ENCODE measurements at regions of chr19 and their contacts with region 1.

Region 1: GRCh38 chr19:58328999-58329398 is 2.2 kb downstream of the ZSCAN22 start:
- DNase-seq: no peak
- H3K4me3 ChIP-seq: no peak overlapping the region
- H3K27ac ChIP-seq: no peak overlapping the region
- H3K4me1 ChIP-seq: peaks cover 15% of the 10 kb centered on the region
- H3K27me3 ChIP-seq: no peaks in the 10 kb centered on the region
- CTCF ChIP-seq: no peak
- EP300 ChIP-seq: no peak
- POLR2A ChIP-seq: no peak

Region 2: DNA sequence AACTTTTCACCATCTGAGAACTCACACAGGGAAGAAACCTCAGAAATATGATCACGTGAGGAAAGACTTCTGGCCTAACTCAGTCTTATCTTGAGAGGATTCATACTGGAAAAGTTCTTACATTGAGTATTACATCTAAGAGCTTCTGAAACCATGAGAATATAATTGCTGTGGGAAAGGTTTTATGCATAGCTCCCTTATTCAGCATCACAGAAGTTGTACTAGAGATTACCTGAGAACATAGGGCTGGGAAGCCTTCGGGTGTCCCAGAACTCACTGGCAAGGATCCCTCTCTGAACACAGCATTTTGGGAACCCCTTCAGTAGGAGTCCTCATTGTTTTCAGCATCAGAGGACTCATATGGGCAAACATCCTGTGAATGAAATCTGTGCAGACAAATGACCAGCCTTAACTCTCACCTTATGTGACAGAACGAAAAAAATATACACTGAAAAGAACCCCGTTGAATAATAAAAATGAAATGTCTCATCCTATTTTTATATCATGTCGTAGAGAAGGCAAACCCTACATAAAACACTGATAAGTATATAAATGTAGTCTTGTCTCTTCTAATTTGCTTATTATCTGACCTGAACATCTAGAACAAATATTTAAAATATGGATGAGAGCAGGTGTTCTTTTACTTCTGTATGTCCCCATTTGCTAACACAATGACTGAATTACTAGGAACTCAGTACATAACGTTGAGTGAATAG is 131.9 kb before region 1 on chr19:
- intact Hi-C with region 1: no loop called
- DNase-seq: no peak
- H3K4me3 ChIP-seq: no peak overlapping the region
- H3K27ac ChIP-seq: no peak overlapping the region
- H3K4me1 ChIP-seq: no peaks in the 10 kb centered on the region
- H3K27me3 ChIP-seq: no peaks in the 10 kb centered on the region
- CTCF ChIP-seq: no peak
- EP300 ChIP-seq: no peak
- POLR2A ChIP-seq: no peak

Region 3: DNA sequence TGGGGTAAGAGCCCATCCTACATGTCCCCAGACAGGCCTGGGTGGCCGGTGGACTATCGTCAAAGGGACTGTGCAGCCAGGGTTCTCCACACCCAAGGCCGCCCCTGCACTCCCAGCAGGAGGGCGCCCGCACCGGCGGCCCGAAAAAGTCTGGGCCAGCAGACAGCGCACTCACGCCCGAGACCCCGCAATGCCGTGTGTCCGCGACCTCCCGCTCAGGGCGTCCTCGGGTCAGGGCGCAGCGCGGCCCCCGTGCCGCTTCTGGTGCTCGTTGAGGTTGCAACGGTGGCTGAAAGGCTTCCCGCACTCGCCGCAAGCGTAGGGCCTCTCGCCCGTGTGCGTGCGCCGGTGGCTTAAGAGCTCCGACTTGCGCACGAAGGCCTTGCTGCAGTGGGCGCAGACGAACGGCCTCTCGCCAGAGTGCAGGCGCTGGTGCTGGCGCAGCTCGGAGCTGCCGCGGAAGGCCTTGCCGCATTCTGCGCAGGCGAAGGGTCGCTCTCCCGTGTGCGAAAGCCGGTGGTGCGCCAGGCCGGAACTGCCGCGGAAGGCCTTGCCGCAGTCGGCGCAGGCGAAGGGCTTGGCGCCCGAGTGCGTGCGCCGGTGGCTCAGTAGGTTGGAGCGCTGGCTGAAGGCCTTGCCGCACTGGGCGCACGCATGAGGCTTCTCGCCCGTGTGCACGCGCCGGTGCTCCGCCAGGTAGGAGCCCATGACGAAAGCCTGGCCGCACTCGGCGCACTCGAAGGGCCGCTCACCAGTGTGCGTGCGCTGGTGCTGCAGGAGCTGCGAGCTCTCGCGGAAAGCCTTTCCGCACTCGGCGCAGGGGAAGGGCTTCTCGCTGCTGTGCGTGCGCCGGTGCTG is 27.1 kb after region 1 on chr19:
- intact Hi-C with region 1: loop called in 1 of 4 experiments (anchors 2 kb)
- DNase-seq: peak in 2 of 5 donors; percentile 41 to 44
- H3K4me3 ChIP-seq: peak overlapping the region; percentile 12
- H3K27ac ChIP-seq: peak overlapping the region in 1 of 2 donors; percentile 15
- H3K4me1 ChIP-seq: no peaks in the 10 kb centered on the region
- H3K27me3 ChIP-seq: no peaks in the 10 kb centered on the region
- CTCF ChIP-seq: no peak
- EP300 ChIP-seq: no peak
- POLR2A ChIP-seq: no peak